ENCODE measurements at regions of chr11 and their contacts with region 1.

Region 1: GRCh38 chr11:65274735-65275682 is 13.2 kb downstream of the POLA2 start:
- DNase-seq: peak; percentile 72
- ATAC-seq: peak; percentile 85

Region 2: GRCh38 chr11:65069217-65069616 is 205.8 kb before region 1 on chr11:
- intact Hi-C with region 1: no loop called
- DNase-seq: no peak
- ATAC-seq: no peak

Region 3: DNA sequence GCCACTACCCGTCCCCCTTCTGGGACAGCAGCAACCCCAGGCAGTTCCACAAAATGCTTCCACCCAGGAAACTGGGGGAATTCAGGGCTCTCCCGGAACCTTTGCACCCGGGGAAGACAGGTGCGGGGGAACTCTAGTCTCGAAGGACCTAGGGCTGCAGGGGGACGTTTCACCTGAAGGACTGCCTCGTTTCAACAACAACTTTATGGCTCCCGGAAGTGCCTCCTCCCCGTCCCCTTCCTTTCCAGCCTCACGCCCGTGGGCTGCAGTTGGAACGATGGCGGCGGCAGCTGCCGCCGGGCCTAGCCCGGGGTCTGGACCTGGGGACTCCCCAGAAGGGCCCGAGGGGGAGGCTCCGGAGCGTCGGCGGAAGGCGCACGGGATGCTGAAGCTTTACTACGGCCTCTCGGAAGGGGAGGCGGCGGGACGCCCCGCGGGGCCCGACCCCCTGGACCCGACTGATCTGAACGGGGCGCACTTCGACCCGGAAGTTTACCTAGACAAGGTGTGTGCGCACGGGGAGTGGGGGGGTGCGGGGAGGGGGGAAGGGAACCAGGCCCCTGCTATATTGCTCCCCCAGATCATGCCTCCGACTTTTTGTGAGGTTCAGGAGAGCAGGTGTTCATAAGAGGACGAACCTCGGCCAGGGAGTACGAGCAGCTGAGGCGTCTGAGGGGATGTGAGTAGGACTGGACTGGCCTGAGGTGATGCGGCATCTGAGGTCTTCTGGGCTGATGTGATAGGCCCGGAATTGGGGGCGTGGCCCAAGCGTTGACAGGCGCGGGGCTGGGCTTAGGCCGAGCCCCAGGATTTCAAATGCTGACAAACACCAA is 178.8 kb before region 1 on chr11 and contains the start of gene VPS51:
- intact Hi-C with region 1: no loop called
- DNase-seq: peak; percentile 92 to 94
- ATAC-seq: peak; percentile 95
- total RNA-seq, gene VPS51: 174 to 186 TPM

Region 4: GRCh38 chr11:65314501-65315203 is 39.6 kb after region 1 on chr11 and contains the start of gene CDC42EP2:
- intact Hi-C with region 1: loop called in 1 of 2 experiments (anchors 5 kb)
- DNase-seq: peak; percentile 84 to 90
- ATAC-seq: peak; percentile 85
- total RNA-seq, gene CDC42EP2: 10.3 to 16.2 TPM

Region 5: GRCh38 chr11:65329944-65330403 is 55.0 kb after region 1 on chr11:
- intact Hi-C with region 1: loop called (anchors 5 kb)
- DNase-seq: peak; percentile 85 to 98
- ATAC-seq: peak; percentile 25

Measured in left colon (tissue), 2 donors.